Panc1 (cell line): ENCODE measurements at regions of chr9 and their contacts with region 1.

Region 1: GRCh38 chr9:129737479-129738274 is 15.2 kb downstream of the PTGES start:
- DNase-seq: no peak
- ATAC-seq: peak; percentile 96
- H3K4me3 ChIP-seq: peak overlapping the region; percentile 44 to 49
- H3K27ac ChIP-seq: peak overlapping the region; percentile 42
- H3K4me1 ChIP-seq: no peaks in the 10 kb centered on the region
- H3K27me3 ChIP-seq: no peaks in the 10 kb centered on the region
- CTCF ChIP-seq: peak; percentile 89

Region 2: DNA sequence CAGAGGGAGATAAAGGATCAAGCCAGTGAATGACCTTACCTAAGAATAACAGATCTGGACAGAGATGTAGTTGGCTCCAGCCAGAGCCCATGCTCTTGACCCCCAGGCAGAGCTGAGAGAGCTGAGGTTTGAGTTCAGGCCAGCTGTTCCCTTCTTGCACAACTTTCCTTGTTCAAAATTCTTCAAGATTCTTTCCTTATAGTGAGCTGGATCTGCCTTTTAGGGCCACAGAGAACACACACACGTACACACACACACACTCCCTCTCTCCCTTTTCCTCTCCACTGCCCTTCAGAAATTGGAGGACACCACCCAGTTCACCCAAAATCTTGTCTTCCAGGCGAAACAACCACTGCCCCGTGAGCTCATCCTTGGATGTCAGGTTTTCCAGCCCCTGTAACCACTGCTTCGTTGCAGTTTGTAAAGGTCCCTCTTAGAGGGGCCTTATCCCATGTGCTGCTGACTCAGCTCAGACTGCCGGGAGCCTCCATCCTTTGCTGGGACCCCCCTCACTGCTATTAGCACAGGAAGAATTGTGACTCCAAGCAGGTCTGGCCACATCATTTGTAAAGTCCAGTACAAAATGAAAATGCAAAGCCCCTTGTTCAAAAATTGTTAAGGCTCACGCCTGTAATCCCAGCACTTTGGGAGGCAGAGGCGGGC is 25.7 kb after region 1 on chr9:
- CTCF ChIA-PET with region 1: interaction called, 21 read pairs
- POLR2A ChIA-PET with region 1: no interaction called
- in situ Hi-C with region 1: no loop called
- intact Hi-C with region 1: no loop called
- DNase-seq: no peak
- ATAC-seq: no peak
- H3K4me3 ChIP-seq: no peak overlapping the region
- H3K27ac ChIP-seq: no peak overlapping the region
- H3K4me1 ChIP-seq: peaks cover 4% of the 10 kb centered on the region; the same call in 1 of the 2 replicates
- H3K27me3 ChIP-seq: no peaks in the 10 kb centered on the region
- CTCF ChIP-seq: no peak

Region 3: DNA sequence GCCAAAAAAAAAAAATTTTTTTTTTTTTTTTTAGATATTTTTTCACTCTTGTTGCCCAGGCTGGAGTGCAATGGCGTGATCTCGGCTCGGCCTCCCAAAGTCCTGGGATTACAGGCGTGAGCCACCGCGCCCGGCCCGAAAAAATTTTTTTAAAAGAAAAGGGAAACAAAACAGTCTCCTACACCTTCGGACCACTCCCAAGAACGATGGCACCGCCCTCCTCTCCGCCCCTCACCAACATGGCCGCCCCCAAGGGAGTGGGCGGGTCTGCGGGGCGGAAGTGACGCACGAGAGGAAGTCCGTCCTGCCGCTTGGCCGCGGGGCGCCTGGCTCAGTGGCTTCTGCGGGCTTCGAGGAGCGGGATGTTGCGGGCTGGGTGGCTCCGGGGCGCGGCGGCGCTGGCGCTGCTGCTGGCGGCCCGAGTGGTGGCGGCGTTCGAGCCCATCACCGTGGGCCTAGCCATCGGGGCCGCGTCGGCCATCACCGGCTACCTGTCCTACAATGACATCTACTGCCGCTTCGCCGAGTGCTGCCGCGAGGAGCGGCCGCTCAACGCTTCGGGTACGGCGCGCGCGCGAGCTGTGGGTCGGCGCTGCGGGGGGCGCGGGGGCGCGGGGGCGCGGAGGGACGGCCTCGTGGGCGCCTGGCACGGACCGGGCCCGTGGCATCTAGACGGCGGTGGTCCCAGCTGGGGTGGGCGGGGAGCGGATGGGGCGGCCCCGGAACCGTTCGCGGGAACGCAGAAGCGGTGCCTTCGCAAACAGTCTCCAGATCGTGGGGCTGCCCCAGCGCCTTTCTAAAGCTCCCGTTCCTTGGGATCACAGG is 65.4 kb after region 1 on chr9 and contains the start of gene TOR1B:
- CTCF ChIA-PET with region 1: interaction called, 11 read pairs
- POLR2A ChIA-PET with region 1: no interaction called
- in situ Hi-C with region 1: no loop called
- intact Hi-C with region 1: no loop called
- DNase-seq: peak; percentile 51
- ATAC-seq: peak; percentile 99
- H3K4me3 ChIP-seq: peak within 1 kb of the TSS; percentile 68 to 78
- H3K27ac ChIP-seq: peak within 1 kb of the TSS; percentile 79
- H3K4me1 ChIP-seq: peaks cover 3% of the 10 kb centered on the region
- H3K27me3 ChIP-seq: no peaks in the 10 kb centered on the region
- CTCF ChIP-seq: no peak
- total RNA-seq, gene TOR1B: 37.6 TPM